Mammary epithelial cell (primary cell): ENCODE measurements at regions of chr13 and their contacts with region 1.

Region 1: GRCh38 chr13:29707876-29708543 is 112.5 kb upstream of the SLC7A1 start:
- DNase-seq: peak; percentile 52
- H3K4me3 ChIP-seq: no peak overlapping the region
- H3K27ac ChIP-seq: no peak overlapping the region
- H3K4me1 ChIP-seq: no peaks in the 10 kb centered on the region
- H3K27me3 ChIP-seq: peaks cover 2% of the 10 kb centered on the region
- CTCF ChIP-seq: peak; percentile 71 to 93

Region 2: DNA sequence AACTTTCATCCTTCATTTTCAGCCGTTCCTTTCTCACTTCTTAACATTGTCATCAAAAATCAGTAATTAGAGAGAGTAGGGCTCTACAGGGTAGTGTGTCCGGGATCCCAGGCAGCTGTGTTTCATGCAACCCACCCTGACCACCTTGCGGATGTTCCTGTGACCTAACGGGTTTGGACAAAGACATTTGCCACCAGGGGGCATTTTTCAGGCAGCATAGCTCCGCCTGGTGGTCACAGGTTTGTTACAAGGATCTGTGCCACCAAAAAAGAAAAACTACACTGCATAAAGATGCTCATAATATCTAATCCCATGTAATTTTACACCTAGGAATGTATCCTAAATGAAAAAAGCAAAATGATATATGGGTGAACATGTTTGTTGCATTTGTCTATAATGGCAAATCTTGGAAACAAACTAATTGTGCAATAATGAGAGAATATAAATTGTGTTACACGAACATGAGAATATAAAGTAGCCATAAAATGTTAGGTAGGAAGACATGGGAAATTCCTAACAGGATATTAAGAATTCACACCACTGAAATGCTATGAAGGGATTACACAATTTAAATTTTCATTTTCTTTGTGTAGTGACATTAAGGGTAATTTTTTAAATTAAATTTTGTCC is 235.6 kb before region 1 on chr13:
- CTCF ChIA-PET with region 1: no interaction called
- dilution Hi-C with region 1: no loop called
- in situ Hi-C with region 1: no loop called
- intact Hi-C with region 1: loop called (anchors 1 kb)
- DNase-seq: peak; percentile 29
- H3K4me3 ChIP-seq: no peak overlapping the region
- H3K27ac ChIP-seq: no peak overlapping the region
- H3K4me1 ChIP-seq: no peaks in the 10 kb centered on the region
- H3K27me3 ChIP-seq: no peaks in the 10 kb centered on the region
- CTCF ChIP-seq: peak; percentile 99 to 100

Region 3: GRCh38 chr13:29513397-29514322 is 194.3 kb before region 1 on chr13:
- CTCF ChIA-PET with region 1: no interaction called
- dilution Hi-C with region 1: loop called (anchors 25 kb)
- in situ Hi-C with region 1: loop called in 1 of 2 experiments (anchors 10 kb)
- intact Hi-C with region 1: loop called (anchors 1 kb)
- DNase-seq: peak; percentile 10
- H3K4me3 ChIP-seq: no peak overlapping the region
- H3K27ac ChIP-seq: no peak overlapping the region
- H3K4me1 ChIP-seq: no peaks in the 10 kb centered on the region
- H3K27me3 ChIP-seq: no peaks in the 10 kb centered on the region
- CTCF ChIP-seq: no peak

Region 4: GRCh38 chr13:29564818-29565217 is 143.2 kb before region 1 on chr13:
- CTCF ChIA-PET with region 1: no interaction called
- dilution Hi-C with region 1: no loop called
- in situ Hi-C with region 1: no loop called
- intact Hi-C with region 1: loop called (anchors 1 kb)
- DNase-seq: no peak
- H3K4me3 ChIP-seq: no peak overlapping the region
- H3K27ac ChIP-seq: no peak overlapping the region
- H3K4me1 ChIP-seq: peaks cover 33% of the 10 kb centered on the region
- H3K27me3 ChIP-seq: no peaks in the 10 kb centered on the region
- CTCF ChIP-seq: no peak